Caco-2 (cell line): ENCODE measurements at regions of chr1 and their contacts with region 1.

Region 1: DNA sequence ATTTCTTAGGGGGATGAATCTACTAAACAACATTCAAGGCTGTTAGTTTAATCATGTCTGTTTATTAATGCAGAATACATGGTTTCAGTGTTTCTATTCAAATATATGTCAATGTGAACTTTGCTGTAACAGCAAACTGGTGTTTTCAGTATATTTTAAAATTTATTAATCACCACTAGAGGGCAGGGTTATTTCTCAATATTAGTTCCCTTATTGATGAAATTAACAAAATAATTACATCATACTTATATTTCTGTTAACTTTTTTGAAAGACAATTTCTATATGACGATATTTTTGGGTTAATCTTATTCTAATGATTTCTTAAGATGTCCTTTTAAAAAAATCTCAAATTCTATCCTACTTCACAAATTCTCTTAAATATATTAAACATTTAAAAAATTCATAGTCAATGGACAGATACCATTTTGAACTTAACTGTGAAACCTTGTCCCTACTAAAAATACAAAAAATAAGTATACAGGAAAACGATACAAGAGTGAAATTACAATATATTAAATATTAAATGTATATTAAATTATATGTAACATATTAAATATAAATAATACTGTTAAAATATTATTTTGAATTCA is 1034.1 kb upstream of the PRMT6 start:
- DNase-seq: no peak
- H3K4me3 ChIP-seq: no peak overlapping the region
- H3K4me3 Mint-ChIP-seq: no peak overlapping the region
- H3K27ac Mint-ChIP-seq: no peak overlapping the region
- H3K4me1 ChIP-seq: no peaks in the 10 kb centered on the region
- H3K4me1 Mint-ChIP-seq: no peaks in the 10 kb centered on the region
- H3K27me3 ChIP-seq: no peaks in the 10 kb centered on the region
- H3K27me3 Mint-ChIP-seq: peaks cover 3% of the 10 kb centered on the region
- CTCF ChIP-seq: peak; percentile 17 to 31

Region 2: DNA sequence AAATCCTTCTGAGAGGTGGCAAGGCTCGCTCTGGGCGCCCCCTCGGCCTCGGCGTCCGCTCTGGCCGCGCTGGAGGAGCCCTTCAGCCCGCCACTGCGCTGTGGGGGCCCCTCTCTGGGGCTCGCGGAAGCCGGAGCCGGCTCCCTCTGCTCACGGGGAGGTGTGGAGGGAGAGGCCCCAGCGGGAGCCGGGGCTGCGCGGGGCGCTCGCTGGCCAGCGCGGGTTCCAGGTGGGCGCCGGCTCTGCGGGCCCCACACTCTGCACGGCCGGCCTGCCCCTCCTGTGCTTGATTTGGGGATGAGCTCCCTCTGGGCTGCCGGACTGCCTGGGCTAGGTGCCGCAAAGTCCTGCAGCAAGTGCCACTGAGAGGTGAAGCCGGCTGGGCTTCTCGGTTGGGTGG is 226.7 kb before region 1 on chr1:
- CTCF ChIA-PET with region 1: no interaction called
- POLR2A ChIA-PET with region 1: no interaction called
- intact Hi-C with region 1: no loop called
- DNase-seq: no peak
- H3K4me3 ChIP-seq: no peak overlapping the region
- H3K4me3 Mint-ChIP-seq: no peak overlapping the region
- H3K27ac Mint-ChIP-seq: no peak overlapping the region
- H3K4me1 ChIP-seq: no peaks in the 10 kb centered on the region
- H3K4me1 Mint-ChIP-seq: no peaks in the 10 kb centered on the region
- H3K27me3 ChIP-seq: no peaks in the 10 kb centered on the region
- H3K27me3 Mint-ChIP-seq: no peaks in the 10 kb centered on the region
- CTCF ChIP-seq: no peak

Region 3: GRCh38 chr1:106975944-106976343 is 953.5 kb after region 1 on chr1:
- CTCF ChIA-PET with region 1: no interaction called
- POLR2A ChIA-PET with region 1: no interaction called
- intact Hi-C with region 1: loop called (anchors 5 kb)
- DNase-seq: no peak
- H3K4me3 ChIP-seq: no peak overlapping the region
- H3K4me3 Mint-ChIP-seq: no peak overlapping the region
- H3K27ac Mint-ChIP-seq: no peak overlapping the region
- H3K4me1 ChIP-seq: no peaks in the 10 kb centered on the region
- H3K4me1 Mint-ChIP-seq: no peaks in the 10 kb centered on the region
- H3K27me3 ChIP-seq: no peaks in the 10 kb centered on the region
- H3K27me3 Mint-ChIP-seq: no peaks in the 10 kb centered on the region
- CTCF ChIP-seq: no peak